ENCODE measurements at regions of chr11 and their contacts with region 1.

Region 1: DNA sequence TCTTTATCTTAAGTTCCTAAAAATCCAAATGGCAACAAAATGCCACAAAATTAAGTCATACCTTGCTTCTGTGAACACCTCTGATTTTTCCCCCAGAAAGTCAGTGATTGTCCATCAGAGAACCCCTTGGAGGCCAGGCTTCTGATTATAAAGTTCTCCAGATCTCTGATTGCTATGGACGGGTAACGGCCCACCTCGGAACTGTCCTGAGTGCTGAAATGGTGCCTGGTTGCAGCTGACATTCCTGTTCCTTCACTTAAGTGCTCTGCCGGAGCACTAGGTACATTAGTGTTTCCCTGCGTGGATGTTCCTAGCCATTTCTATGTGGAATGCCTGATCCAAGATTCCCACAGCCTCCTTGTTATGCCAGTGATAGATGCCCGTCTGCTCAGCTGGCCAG is 85.0 kb downstream of the CHST1 start:
- DNase-seq: no peak
- H3K4me3 ChIP-seq: no peak overlapping the region
- H3K27ac ChIP-seq: no peak overlapping the region
- H3K4me1 ChIP-seq: no peaks in the 10 kb centered on the region
- H3K27me3 ChIP-seq: peaks cover 0 to 62% of the 10 kb centered on the region in 2 donors
- CTCF ChIP-seq: no peak
- POLR2A ChIP-seq: no peak

Region 2: GRCh38 chr11:45062971-45063611 is 517.3 kb before region 1 on chr11:
- intact Hi-C with region 1: no loop called
- DNase-seq: no peak
- H3K4me3 ChIP-seq: no peak overlapping the region
- H3K27ac ChIP-seq: peak overlapping the region in 1 of 2 donors; percentile 72
- H3K4me1 ChIP-seq: no peaks in the 10 kb centered on the region
- H3K27me3 ChIP-seq: no peaks in the 10 kb centered on the region
- CTCF ChIP-seq: no peak
- POLR2A ChIP-seq: no peak

Region 3: DNA sequence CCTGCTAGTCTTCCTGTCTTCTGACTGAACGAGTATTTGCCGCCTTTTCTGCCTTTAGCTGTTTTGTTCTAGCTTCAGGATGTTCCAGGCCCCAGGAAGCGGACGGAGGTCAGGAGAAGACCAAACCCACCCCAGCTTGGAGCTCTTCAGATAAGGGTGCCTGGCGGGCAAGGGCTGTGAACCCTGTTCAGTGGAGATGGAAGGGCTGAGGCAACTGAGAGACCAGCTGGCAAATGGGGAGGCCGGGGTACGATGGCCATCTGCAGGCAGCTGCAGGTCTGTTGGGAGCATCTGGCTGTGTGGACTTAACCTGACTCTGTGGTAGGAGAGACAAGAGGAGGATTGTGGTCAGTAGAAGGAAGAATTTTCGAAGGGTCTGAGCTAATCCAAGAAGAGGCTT is 10.6 kb before region 1 on chr11:
- intact Hi-C with region 1: loop called (anchors 1 kb)
- DNase-seq: no peak
- H3K4me3 ChIP-seq: no peak overlapping the region
- H3K27ac ChIP-seq: no peak overlapping the region
- H3K4me1 ChIP-seq: no peaks in the 10 kb centered on the region
- H3K27me3 ChIP-seq: peaks cover 0 to 4% of the 10 kb centered on the region in 2 donors
- CTCF ChIP-seq: no peak
- POLR2A ChIP-seq: no peak

Region 4: GRCh38 chr11:45590743-45591142 is 10.3 kb after region 1 on chr11:
- intact Hi-C with region 1: no loop called
- DNase-seq: no peak
- H3K4me3 ChIP-seq: no peak overlapping the region
- H3K27ac ChIP-seq: no peak overlapping the region
- H3K4me1 ChIP-seq: no peaks in the 10 kb centered on the region
- H3K27me3 ChIP-seq: no peaks in the 10 kb centered on the region
- CTCF ChIP-seq: no peak
- POLR2A ChIP-seq: no peak

Region 5: DNA sequence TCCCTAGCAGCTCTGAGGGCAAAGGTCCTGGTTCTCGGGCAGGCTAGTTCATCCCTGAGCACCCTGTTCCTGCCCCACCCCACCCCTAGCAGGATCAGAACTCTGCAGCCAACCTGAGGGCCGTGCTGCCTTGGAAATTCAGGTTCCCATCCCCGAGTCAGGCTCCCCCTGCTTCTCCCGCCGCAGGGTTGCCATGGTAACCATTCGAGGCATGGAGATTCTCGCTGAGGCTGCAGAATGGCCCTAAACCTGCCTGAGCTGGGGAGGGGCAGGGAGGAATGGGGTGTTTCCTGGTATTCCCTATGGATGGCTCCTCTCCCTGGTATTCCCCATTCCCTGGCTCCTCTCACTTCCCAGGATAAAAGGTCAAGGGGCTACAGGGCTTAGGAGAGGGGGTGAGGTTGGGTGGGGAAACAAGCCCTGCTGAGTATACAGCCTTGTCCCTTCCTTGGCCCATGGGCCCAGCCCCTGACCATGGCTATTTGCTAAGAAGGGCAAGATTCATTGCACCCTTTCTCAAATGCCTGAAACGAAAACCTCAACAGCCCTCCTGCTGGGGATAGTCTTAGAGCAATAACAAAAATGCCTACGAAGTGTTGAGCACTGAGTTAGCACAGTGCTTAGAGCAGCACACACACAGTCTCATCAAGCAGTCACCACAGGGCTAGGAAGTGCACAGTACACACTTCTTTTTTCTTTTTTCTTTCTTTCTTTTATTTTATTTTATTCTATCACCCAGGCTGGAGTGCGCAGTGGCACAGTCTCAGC is 26.3 kb after region 1 on chr11:
- intact Hi-C with region 1: no loop called
- DNase-seq: no peak
- H3K4me3 ChIP-seq: no peak overlapping the region
- H3K27ac ChIP-seq: no peak overlapping the region
- H3K4me1 ChIP-seq: no peaks in the 10 kb centered on the region
- H3K27me3 ChIP-seq: peaks cover 0 to 10% of the 10 kb centered on the region in 2 donors
- CTCF ChIP-seq: no peak
- POLR2A ChIP-seq: no peak